Lower leg skin (tissue), 4 donors: ENCODE measurements at regions of chr10 and their contacts with region 1.

Region 1: GRCh38 chr10:36519909-36520308 is 605.5 kb upstream of the ANKRD30A start:
- DNase-seq: no peak
- H3K4me3 ChIP-seq: no peak overlapping the region
- CTCF ChIP-seq: no peak
- POLR2A ChIP-seq: no peak

Region 2: GRCh38 chr10:36669615-36670352 is 149.9 kb after region 1 on chr10:
- intact Hi-C with region 1: loop called (anchors 5 kb)
- DNase-seq: no peak
- H3K4me3 ChIP-seq: no peak overlapping the region
- CTCF ChIP-seq: no peak
- POLR2A ChIP-seq: no peak

Region 3: DNA sequence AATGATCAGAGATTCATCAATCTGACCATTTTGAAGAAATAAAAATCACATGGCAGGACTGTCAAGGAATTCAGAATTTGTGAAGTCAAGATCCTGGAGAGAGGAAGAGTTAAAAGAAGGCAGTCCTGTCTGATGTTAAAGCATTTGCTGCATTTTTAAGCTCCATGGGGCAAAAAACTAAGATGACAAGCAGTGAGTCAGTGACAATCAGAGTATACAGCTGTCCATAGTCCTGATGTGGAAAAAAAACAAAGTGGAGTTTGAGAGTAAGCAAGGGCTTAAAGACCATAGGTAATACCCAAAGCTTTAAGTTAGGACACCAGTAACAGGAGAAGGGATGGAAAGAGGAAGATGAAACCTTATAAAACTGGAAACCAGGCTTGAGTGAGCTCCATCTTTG is 192.8 kb after region 1 on chr10:
- intact Hi-C with region 1: no loop called
- DNase-seq: no peak
- H3K4me3 ChIP-seq: no peak overlapping the region
- CTCF ChIP-seq: no peak
- POLR2A ChIP-seq: no peak